Activated naive CD8-positive, alpha-beta T cell treated with anti-CD3 and anti-CD28 coated beads, Interleukin-2, amount 10 ng/mL, durations not matched to agents 7 days and 5 days (primary cell): ENCODE measurements at regions of chr12 and their contacts with region 1.

Region 1: DNA sequence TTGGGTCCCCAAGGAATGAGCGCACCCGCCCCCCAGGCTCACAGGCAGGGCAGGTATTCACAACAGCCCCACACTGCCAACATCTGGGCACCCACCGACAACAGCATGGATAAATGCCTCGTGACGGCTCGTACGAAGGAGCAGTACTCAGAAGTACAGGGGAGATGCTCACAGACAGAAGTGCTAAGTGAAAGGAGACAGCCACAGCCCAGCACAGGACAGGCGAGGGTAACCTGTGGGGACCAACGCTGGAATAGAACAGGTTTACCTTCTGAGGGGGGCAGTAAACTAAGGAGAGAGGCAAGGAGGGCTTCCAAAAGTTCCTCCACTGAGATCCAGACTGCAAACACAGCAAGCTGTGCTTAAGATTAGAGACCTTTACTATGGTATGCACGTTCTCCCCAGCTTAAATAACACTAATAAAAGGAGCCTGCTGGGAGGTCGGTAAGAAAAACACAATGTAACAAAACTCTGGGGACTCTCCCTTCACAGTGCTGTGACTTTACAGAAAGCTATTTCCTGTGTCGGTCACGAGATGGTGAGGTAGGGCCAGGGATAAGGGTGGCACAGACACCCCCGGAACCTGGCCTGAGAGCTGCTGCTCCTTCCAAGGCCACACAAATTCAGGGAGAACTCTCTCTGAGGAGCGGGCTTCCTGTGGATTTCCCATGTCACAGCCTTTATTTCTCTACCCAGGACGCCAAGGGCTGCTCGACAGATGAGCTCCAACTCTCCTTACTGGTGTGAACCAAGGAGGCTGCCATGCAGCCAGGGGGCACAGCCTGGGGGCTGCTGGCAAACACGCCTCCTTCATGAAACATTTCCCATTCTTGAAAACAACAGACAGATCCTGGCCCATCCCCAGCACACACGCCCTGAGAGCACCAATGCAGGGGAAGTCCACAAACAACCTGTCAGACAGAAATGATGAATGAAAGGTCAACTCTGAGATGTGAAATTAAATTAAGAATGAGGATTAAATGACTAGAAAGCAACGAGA is 26.3 kb downstream of the SLC15A4 start:
- DNase-seq: no peak
- ATAC-seq: no peak
- H3K4me3 Mint-ChIP-seq: no peak overlapping the region
- H3K27ac Mint-ChIP-seq: peak overlapping the region; percentile 30
- H3K4me1 Mint-ChIP-seq: peaks cover 17% of the 10 kb centered on the region
- H3K27me3 Mint-ChIP-seq: no peaks in the 10 kb centered on the region

Region 2: GRCh38 chr12:128823916-128824839 is 26.8 kb after region 1 on chr12 and contains the start of gene SLC15A4:
- POLR2A ChIA-PET with region 1: interaction called, 12 read pairs
- DNase-seq: peak; percentile 97
- ATAC-seq: peak; percentile 94
- H3K4me3 Mint-ChIP-seq: peak within 1 kb of the TSS; percentile 89
- H3K27ac Mint-ChIP-seq: peak within 1 kb of the TSS; percentile 78
- H3K4me1 Mint-ChIP-seq: peaks cover 18% of the 10 kb centered on the region
- H3K27me3 Mint-ChIP-seq: peaks cover 6% of the 10 kb centered on the region
- total RNA-seq, gene SLC15A4: 21.4 to 25.8 TPM